Naive thymus-derived CD4-positive, alpha-beta T cell (primary cell): ENCODE measurements at regions of chr20 and their contacts with region 1.

Region 1: GRCh38 chr20:34753706-34754461 is 49.7 kb downstream of the TP53INP2 start:
- DNase-seq: no peak
- ATAC-seq: no peak
- H3K4me3 ChIP-seq: no peak overlapping the region
- H3K4me3 Mint-ChIP-seq: no peak overlapping the region
- H3K27ac ChIP-seq: no peak overlapping the region
- H3K27ac Mint-ChIP-seq: no peak overlapping the region
- H3K4me1 ChIP-seq: no peaks in the 10 kb centered on the region
- H3K4me1 Mint-ChIP-seq: peaks cover 0 to 6% (median 0%) of the 10 kb centered on the region in 7 donors
- H3K27me3 ChIP-seq: no peaks in the 10 kb centered on the region
- H3K27me3 Mint-ChIP-seq: no peaks in the 10 kb centered on the region

Region 2: GRCh38 chr20:34732523-34732922 is 21.4 kb before region 1 on chr20:
- CTCF ChIA-PET with region 1: no interaction called
- POLR2A ChIA-PET with region 1: no interaction called
- intact Hi-C with region 1: no loop called
- DNase-seq: no peak
- ATAC-seq: no peak
- H3K4me3 ChIP-seq: no peak overlapping the region
- H3K4me3 Mint-ChIP-seq: no peak overlapping the region
- H3K27ac ChIP-seq: no peak overlapping the region
- H3K27ac Mint-ChIP-seq: no peak overlapping the region
- H3K4me1 ChIP-seq: no peaks in the 10 kb centered on the region
- H3K4me1 Mint-ChIP-seq: peaks cover 0 to 2% (median 0%) of the 10 kb centered on the region in 7 donors
- H3K27me3 ChIP-seq: no peaks in the 10 kb centered on the region
- H3K27me3 Mint-ChIP-seq: no peaks in the 10 kb centered on the region

Region 3: GRCh38 chr20:34768096-34768495 is 14.2 kb after region 1 on chr20:
- CTCF ChIA-PET with region 1: interaction called, 16 read pairs
- POLR2A ChIA-PET with region 1: no interaction called
- intact Hi-C with region 1: no loop called
- DNase-seq: no peak
- ATAC-seq: no peak
- H3K4me3 ChIP-seq: no peak overlapping the region
- H3K4me3 Mint-ChIP-seq: no peak overlapping the region
- H3K27ac ChIP-seq: no peak overlapping the region
- H3K27ac Mint-ChIP-seq: no peak overlapping the region
- H3K4me1 ChIP-seq: no peaks in the 10 kb centered on the region
- H3K4me1 Mint-ChIP-seq: peaks cover 0 to 3% (median 0%) of the 10 kb centered on the region in 7 donors
- H3K27me3 ChIP-seq: no peaks in the 10 kb centered on the region
- H3K27me3 Mint-ChIP-seq: no peaks in the 10 kb centered on the region